ENCODE measurements at regions of chr18 and their contacts with region 1.

Region 1: DNA sequence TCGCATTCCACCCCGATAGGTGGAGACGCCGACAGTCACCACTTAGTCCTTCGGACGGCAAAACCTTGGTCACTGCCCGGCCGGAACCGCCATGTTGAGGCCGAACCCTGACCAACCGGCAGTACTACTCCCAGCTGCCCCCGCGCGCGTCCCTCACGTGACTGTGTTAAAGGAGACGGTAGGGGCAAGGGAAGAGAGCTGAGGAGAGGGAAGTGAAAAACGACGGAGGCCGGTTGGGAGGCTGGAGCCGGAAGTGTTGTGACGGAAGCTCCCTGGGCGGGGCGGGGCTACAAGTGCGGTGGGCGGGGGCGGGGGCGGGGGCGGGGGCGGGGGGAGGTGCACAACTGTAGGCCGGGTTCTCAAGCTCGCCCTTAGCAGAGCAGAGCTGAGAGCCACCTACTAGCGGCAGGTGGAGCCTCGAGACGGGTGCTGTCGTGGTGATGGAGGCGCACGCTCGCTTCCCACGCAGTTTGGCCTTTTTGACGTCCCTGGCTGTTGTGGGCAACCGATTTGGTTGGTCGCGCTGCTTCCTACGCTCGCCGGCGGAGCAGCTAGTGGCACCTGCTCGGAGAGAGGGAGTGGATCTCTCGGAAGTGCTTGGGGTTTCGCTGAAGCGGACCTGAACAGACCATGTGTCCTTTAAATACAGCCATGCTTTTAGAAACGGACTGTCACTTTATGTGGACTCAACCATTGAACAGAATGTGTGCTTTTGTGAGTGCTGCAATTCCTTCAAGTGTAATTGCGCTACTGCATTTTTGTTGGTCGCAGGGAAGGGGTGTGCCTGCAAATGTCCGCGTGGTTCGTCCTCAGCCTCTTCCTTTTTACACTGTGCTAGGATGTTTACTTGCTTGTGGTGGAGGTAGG is at the start of gene TRAPPC8:
- DNase-seq: peak; percentile 98
- ATAC-seq: peak; percentile 95
- H3K4me3 ChIP-seq: peak within 1 kb of the TSS; percentile 89
- H3K27ac ChIP-seq: peak within 1 kb of the TSS; percentile 86
- H3K4me1 ChIP-seq: no peaks in the 10 kb centered on the region
- H3K27me3 ChIP-seq: no peaks in the 10 kb centered on the region
- CTCF ChIP-seq: no peak
- POLR2A ChIP-seq: peak; percentile 89
- RAD21 ChIP-seq: no peak
- total RNA-seq, gene TRAPPC8: 50.0 and 54.3 TPM in 2 replicates

Region 2: GRCh38 chr18:32092422-32093101 is 149.3 kb after region 1 on chr18:
- CTCF ChIA-PET with region 1: no interaction called
- POLR2A ChIA-PET with region 1: no interaction called
- dilution Hi-C with region 1: no loop called
- in situ Hi-C with region 1: no loop called
- intact Hi-C with region 1: loop called (anchors 5 kb)
- DNase-seq: peak; percentile 94
- ATAC-seq: peak; percentile 97
- H3K4me3 ChIP-seq: peak overlapping the region; percentile 100
- H3K27ac ChIP-seq: peak overlapping the region; percentile 92
- H3K4me1 ChIP-seq: no peaks in the 10 kb centered on the region
- H3K27me3 ChIP-seq: no peaks in the 10 kb centered on the region
- CTCF ChIP-seq: no peak
- POLR2A ChIP-seq: peak; percentile 63; the same call in 1 of the 2 replicates
- RAD21 ChIP-seq: no peak